HepG2 (cell line): ENCODE measurements at regions of chr10 and their contacts with region 1.

Region 1: GRCh38 chr10:121900443-121901174 is 27.2 kb downstream of the ATE1 start:
- DNase-seq: peak; percentile 62
- ATAC-seq: peak; percentile 83
- H3K4me3 ChIP-seq: no peak overlapping the region
- H3K27ac ChIP-seq: no peak overlapping the region
- H3K4me1 ChIP-seq: peaks cover 15% of the 10 kb centered on the region
- H3K27me3 ChIP-seq: no peaks in the 10 kb centered on the region
- CTCF ChIP-seq: peak; percentile 74
- EP300 ChIP-seq: no peak
- POLR2A ChIP-seq: no peak
- RAD21 ChIP-seq: peak; percentile 46; the same call in 1 of the 2 replicates

Region 2: GRCh38 chr10:121764233-121764942 is 136.2 kb before region 1 on chr10:
- CTCF ChIA-PET with region 1: no interaction called
- POLR2A ChIA-PET with region 1: no interaction called
- in situ Hi-C with region 1: no loop called
- intact Hi-C with region 1: no loop called
- DNase-seq: no peak
- ATAC-seq: no peak
- H3K4me3 ChIP-seq: no peak overlapping the region
- H3K27ac ChIP-seq: no peak overlapping the region
- H3K4me1 ChIP-seq: peaks cover 10% of the 10 kb centered on the region; the same call in 1 of the 2 replicates
- H3K27me3 ChIP-seq: no peaks in the 10 kb centered on the region
- CTCF ChIP-seq: no peak
- EP300 ChIP-seq: no peak
- POLR2A ChIP-seq: no peak
- RAD21 ChIP-seq: no peak

Region 3: GRCh38 chr10:121823993-121824463 is 76.6 kb before region 1 on chr10:
- CTCF ChIA-PET with region 1: no interaction called
- POLR2A ChIA-PET with region 1: no interaction called
- in situ Hi-C with region 1: no loop called
- intact Hi-C with region 1: loop called (anchors 1 kb)
- DNase-seq: peak; percentile 44
- ATAC-seq: peak; percentile 68; the same call in 2 of the 3 replicates
- H3K4me3 ChIP-seq: no peak overlapping the region
- H3K27ac ChIP-seq: no peak overlapping the region
- H3K4me1 ChIP-seq: no peaks in the 10 kb centered on the region
- H3K27me3 ChIP-seq: no peaks in the 10 kb centered on the region
- CTCF ChIP-seq: peak; percentile 56
- EP300 ChIP-seq: no peak
- POLR2A ChIP-seq: no peak
- RAD21 ChIP-seq: no peak; the same call in 1 of the 2 replicates